ENCODE measurements at regions of chrX and their contacts with region 1.

Region 1: DNA sequence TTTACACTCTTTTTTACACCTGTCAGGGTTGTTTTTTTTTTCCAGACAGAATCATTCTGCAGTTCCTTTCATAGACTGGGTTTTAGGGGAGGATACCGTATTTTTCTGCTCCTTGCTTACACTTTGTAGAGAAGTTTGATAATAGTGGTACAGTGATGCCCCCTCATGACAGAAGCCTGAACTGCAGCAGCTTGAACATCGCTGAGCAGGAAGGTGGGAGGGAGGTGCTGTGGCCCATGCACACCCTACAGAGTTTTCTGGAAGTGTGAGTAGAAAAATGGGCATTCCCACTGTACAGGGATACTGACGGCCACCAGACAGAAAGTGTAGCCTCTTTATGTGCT is 54.5 kb downstream of the RAB40A start:
- DNase-seq: peak; percentile 42
- H3K27ac ChIP-seq: no peak overlapping the region
- CTCF ChIP-seq: peak; percentile 75

Region 2: DNA sequence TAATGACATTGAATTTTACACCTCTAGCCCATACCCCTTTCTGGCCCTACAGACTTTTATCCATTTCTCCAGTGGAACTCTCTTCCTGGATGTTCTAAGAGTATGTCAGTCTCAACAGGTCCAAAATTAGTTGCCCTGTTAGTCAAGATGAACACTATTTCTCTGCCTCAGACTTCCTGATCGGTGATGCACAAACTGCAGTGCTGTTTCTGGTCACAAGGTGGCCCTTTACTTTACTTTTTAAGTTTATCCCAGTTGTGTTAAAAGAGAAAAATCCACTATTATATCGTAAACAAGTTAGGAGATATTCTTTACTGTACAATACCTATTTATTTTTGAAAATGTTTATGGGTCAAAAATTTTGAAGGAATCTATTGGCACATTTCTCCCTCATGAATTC is 121.6 kb before region 1 on chrX:
- CTCF ChIA-PET with region 1: interaction called, 15 read pairs
- POLR2A ChIA-PET with region 1: no interaction called
- DNase-seq: peak; percentile 20
- H3K27ac ChIP-seq: no peak overlapping the region
- CTCF ChIP-seq: peak; percentile 67

Region 3: GRCh38 chrX:103453655-103454054 is 11.1 kb before region 1 on chrX:
- CTCF ChIA-PET with region 1: no interaction called
- POLR2A ChIA-PET with region 1: no interaction called
- DNase-seq: peak; percentile 83
- H3K27ac ChIP-seq: no peak overlapping the region
- CTCF ChIP-seq: no peak

Measured in RWPE1 (cell line).